ENCODE measurements at regions of chr18 and their contacts with region 1.

Region 1: GRCh38 chr18:32391126-32391525 is 79.6 kb downstream of the GAREM1 start:
- DNase-seq: no peak
- H3K4me3 ChIP-seq: no peak overlapping the region
- H3K27ac ChIP-seq: peak overlapping the region in 37 of 59 donors; percentile 2 to 74 (median 26)
- H3K27me3 ChIP-seq: no peaks in the 10 kb centered on the region
- CTCF ChIP-seq: no peak

Region 2: GRCh38 chr18:32308493-32309120 is 82.5 kb before region 1 on chr18:
- intact Hi-C with region 1: no loop called
- DNase-seq: no peak
- H3K4me3 ChIP-seq: no peak overlapping the region
- H3K27ac ChIP-seq: peak overlapping the region in 3 of 59 donors; percentile 21 to 42 (median 32)
- H3K27me3 ChIP-seq: no peaks in the 10 kb centered on the region
- CTCF ChIP-seq: no peak

Region 3: DNA sequence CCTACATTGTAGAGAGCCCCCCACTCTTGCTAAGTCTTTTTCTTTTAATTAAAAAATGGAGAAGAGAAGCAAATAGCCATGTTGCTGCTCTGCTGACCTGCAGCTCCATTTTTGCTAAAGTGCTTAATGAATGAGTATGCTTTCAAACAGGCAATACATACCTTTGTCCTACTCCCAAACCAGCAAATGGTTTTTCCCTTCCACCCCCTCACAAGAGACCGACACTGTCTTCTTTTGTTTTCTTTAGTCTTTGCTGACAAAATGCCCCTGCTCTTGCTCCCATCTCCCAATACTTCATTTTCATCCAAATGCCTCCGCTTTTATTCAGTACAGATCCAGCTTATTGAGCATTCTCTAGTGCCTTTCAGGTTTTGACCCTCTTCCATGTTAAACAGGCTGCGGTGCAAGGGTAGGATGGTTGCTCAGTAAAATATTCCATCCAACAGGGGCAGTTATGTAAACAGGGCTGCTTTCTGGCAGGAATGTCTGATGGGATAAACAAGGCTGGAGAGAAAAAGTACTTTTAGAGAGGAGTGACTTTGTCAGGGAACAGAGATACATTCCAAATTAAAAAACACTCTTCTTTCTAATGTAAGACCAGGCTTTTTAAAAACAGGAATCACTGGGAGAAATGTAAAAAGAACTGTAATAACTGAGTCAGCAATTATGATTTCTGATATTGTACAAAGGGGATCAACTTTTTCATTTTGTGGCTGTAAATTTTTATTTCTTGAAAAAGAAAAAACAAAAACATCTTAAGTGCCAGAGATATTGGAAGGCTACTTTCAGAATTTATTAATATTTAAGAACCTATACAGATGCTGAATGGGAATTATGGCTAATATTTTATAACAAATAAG is 64.4 kb before region 1 on chr18:
- intact Hi-C with region 1: loop called in 1 of 2 experiments (anchors 2 kb)
- DNase-seq: no peak
- H3K4me3 ChIP-seq: no peak overlapping the region
- H3K27ac ChIP-seq: peak overlapping the region in 41 of 59 donors; percentile 5 to 71 (median 45)
- H3K27me3 ChIP-seq: no peaks in the 10 kb centered on the region
- CTCF ChIP-seq: no peak

Region 4: GRCh38 chr18:32349728-32350395 is 41.3 kb before region 1 on chr18:
- intact Hi-C with region 1: loop called in 1 of 2 experiments (anchors 1 kb)
- DNase-seq: peak in 4 of 10 donors; percentile 33 to 69 (median 50)
- H3K4me3 ChIP-seq: peak overlapping the region in 6 of 59 donors; percentile 3 to 21 (median 12)
- H3K27ac ChIP-seq: peak overlapping the region in 51 of 59 donors; percentile 3 to 80 (median 56)
- H3K27me3 ChIP-seq: no peaks in the 10 kb centered on the region
- CTCF ChIP-seq: no peak

Region 5: DNA sequence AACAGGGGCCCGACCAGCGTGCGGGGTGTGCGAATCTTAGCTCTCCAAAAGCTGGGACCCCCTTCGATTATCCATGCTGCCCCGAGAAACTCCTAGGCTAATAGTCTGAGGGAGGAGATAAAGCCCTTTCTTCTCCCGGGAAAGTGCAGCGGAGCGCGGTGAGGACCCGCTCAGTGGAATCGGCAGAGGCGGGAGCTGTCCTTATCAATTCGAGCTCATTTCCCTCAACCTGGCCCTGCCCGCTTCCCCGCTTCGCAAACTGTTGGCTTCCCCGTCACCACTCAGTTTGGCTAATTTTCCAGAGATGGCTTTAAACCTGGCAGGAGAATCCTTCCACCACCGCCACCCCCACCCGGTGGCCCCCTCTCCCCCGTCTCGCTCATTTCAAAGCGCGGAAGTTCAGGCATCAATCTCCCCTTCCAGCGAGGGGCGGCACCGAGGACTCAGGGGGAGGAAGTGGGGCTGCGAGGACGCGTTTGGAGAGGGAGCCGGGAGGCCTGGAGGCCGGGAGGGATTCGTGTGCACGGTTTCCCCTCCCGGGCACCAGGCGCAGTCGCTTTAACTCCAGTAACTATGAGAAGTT is 380.1 kb after region 1 on chr18:
- intact Hi-C with region 1: no loop called
- DNase-seq: no peak
- H3K4me3 ChIP-seq: peak overlapping the region; percentile 22 to 77 (median 53)
- H3K27ac ChIP-seq: no peak overlapping the region
- H3K27me3 ChIP-seq: peaks cover 0 to 42% (median 20%) of the 10 kb centered on the region in 45 donors
- CTCF ChIP-seq: no peak